Activated B cell treated with CpG ODN at 0.5 μM for 24 hours (primary cell): ENCODE measurements at regions of chr12 and their contacts with region 1.

Region 1: GRCh38 chr12:101697197-101697929 is at the start of gene CHPT1:
- DNase-seq: peak; percentile 78
- ATAC-seq: peak; percentile 78
- H3K4me3 Mint-ChIP-seq: peak within 1 kb of the TSS; percentile 94
- H3K27ac Mint-ChIP-seq: peak within 1 kb of the TSS; percentile 93
- H3K4me1 Mint-ChIP-seq: peaks cover 60% of the 10 kb centered on the region
- H3K27me3 Mint-ChIP-seq: no peaks in the 10 kb centered on the region
- CTCF ChIP-seq: no peak
- total RNA-seq, gene CHPT1: 36.8 and 42.7 TPM in 2 replicates

Region 2: GRCh38 chr12:101490286-101490920 is 207.0 kb before region 1 on chr12:
- CTCF ChIA-PET with region 1: no interaction called
- POLR2A ChIA-PET with region 1: no interaction called
- intact Hi-C with region 1: loop called (anchors 1 kb)
- DNase-seq: no peak
- ATAC-seq: peak; percentile 61
- H3K4me3 Mint-ChIP-seq: no peak overlapping the region
- H3K27ac Mint-ChIP-seq: no peak overlapping the region
- H3K4me1 Mint-ChIP-seq: no peaks in the 10 kb centered on the region
- H3K27me3 Mint-ChIP-seq: peaks cover 12% of the 10 kb centered on the region
- CTCF ChIP-seq: no peak

Region 3: GRCh38 chr12:101634724-101635123 is 62.6 kb before region 1 on chr12:
- CTCF ChIA-PET with region 1: interaction called, 3 read pairs
- POLR2A ChIA-PET with region 1: interaction called, 22 read pairs
- intact Hi-C with region 1: loop called (anchors 1 kb)
- DNase-seq: no peak
- ATAC-seq: peak; percentile 92
- H3K4me3 Mint-ChIP-seq: peak overlapping the region; percentile 69
- H3K27ac Mint-ChIP-seq: peak overlapping the region; percentile 94
- H3K4me1 Mint-ChIP-seq: peaks cover 41% of the 10 kb centered on the region
- H3K27me3 Mint-ChIP-seq: no peaks in the 10 kb centered on the region
- CTCF ChIP-seq: no peak

Region 4: GRCh38 chr12:101713059-101713682 is 15.8 kb after region 1 on chr12:
- CTCF ChIA-PET with region 1: no interaction called
- POLR2A ChIA-PET with region 1: interaction called, 3 read pairs
- intact Hi-C with region 1: loop called (anchors 2 kb)
- DNase-seq: no peak
- ATAC-seq: no peak
- H3K4me3 Mint-ChIP-seq: no peak overlapping the region
- H3K27ac Mint-ChIP-seq: no peak overlapping the region
- H3K4me1 Mint-ChIP-seq: peaks cover 50% of the 10 kb centered on the region
- H3K27me3 Mint-ChIP-seq: no peaks in the 10 kb centered on the region
- CTCF ChIP-seq: no peak

Region 5: DNA sequence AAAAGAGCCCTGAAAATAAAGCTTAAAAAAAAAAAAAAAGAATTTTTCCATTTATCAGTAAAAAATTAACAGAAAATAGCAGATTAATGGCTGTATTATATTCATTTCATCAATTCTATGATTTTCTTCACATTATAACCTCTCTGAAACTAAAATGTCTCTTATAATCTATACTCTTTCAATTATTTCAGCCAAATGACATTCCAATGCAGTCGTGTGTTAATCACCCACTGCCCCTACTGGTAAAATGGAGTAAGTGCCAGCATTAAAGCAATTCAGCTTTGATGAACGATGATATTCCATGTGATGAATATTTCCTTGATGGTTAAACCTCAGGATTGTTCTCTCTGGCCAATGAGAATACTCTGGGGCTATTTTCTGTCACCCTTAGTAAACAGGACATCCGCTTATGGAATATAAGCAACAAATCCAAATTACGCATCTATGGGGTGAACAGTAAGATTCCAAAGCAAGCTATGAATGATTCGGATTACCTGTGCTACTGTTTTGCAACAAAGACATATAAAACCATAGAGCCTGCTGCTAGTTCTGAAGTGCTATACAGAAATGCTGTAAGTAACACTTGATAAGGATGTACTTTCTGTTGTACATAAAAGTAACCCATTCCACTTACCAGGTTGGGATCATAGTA is 62.2 kb after region 1 on chr12:
- CTCF ChIA-PET with region 1: interaction called, 6 read pairs
- POLR2A ChIA-PET with region 1: interaction called, 8 read pairs
- intact Hi-C with region 1: loop called (anchors 2 kb)
- DNase-seq: no peak
- ATAC-seq: peak; percentile 79
- H3K4me3 Mint-ChIP-seq: no peak overlapping the region
- H3K27ac Mint-ChIP-seq: no peak overlapping the region
- H3K4me1 Mint-ChIP-seq: peaks cover 18% of the 10 kb centered on the region
- H3K27me3 Mint-ChIP-seq: no peaks in the 10 kb centered on the region
- CTCF ChIP-seq: peak; percentile 50

Region 6: GRCh38 chr12:102061560-102062418 is 364.4 kb after region 1 on chr12 and contains the start of gene WASHC3:
- CTCF ChIA-PET with region 1: no interaction called
- POLR2A ChIA-PET with region 1: no interaction called
- intact Hi-C with region 1: loop called (anchors 2 kb)
- DNase-seq: peak; percentile 89
- ATAC-seq: peak; percentile 95
- H3K4me3 Mint-ChIP-seq: peak within 1 kb of the TSS; percentile 98
- H3K27ac Mint-ChIP-seq: peak within 1 kb of the TSS; percentile 97
- H3K4me1 Mint-ChIP-seq: peaks cover 21% of the 10 kb centered on the region
- H3K27me3 Mint-ChIP-seq: no peaks in the 10 kb centered on the region
- CTCF ChIP-seq: no peak
- total RNA-seq, gene WASHC3: 47.3 and 50.6 TPM in 2 replicates